Mucosa of descending colon (tissue), 3 donors: ENCODE measurements at regions of chr19 and their contacts with region 1.

Region 1: DNA sequence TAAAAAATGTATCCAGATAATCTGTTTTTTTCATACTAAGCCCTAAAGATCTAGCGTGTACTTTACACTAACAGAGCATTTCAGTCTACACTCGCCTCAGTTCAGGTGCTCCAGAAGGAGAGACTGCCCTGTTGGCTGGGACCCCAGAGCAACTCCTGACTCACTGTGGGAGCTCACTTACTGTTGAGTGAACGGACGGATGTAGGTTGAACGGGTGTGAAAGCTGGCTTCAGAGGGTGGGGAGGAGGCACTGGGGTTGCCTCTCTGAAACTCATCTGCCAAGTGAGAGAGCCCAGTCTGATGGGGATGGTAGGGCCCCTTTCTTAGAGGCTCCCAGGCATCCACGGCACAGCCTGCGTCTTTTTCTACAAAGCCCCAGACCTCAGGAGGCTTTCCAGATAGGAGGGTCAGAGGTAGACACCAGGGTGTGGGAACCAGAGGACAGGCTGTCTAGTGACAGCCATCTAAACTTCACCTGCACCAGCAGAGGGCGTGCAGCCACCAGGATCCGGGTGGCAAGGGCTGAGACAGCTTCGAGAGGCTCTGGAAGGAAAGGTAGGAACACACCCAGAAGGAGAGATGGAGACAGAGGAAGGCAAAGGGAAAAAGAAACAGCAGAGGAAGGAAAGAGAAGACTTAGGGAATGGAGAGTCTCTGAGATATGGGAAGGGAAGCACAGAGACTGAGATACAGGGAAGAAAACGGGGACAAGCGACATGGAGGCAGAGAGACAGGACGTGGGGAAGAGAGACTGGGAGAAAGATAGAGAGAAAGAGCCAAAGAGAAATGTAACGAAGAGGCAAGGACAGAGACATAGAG is 3.7 kb downstream of the KASH5 start:
- DNase-seq: peak; percentile 75 to 87 (median 79)
- ATAC-seq: peak; percentile 90
- H3K4me3 ChIP-seq: no peak overlapping the region
- H3K4me1 ChIP-seq: no peaks in the 10 kb centered on the region
- CTCF ChIP-seq: peak; percentile 52

Region 2: DNA sequence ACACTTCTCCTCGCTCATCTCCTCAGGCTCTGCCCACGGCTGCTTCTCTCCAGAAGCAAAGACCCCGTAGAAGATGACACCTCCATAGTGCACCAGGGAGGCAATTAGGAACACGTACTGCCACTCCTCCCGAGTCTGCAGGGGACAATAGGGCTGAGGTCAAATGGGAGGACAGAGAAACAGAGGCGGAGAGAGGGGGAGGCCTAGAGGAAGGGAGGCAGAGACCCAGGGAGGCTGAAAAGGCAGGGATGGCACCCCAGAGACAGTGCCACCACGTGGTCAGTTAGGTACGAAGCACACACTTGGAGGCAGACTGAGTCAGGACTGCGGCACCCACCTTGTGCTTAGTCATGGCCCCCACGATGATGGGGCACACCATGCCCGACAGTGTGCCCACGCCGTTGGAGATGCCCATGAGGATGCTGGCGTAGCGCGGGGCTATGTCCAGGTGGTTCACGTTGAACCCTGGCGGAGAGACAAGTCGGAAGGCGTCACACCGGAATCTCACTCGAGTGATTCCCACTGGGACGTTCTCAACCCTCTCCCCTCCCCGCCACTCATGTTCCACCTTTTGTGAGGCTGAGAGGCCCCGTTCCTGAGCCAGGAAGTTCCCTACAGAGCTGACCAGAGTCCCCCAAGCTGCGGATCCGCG is 39.0 kb after region 1 on chr19:
- intact Hi-C with region 1: loop called in 1 of 2 experiments (anchors 5 kb)
- DNase-seq: peak in 1 of 3 donors; percentile 37
- ATAC-seq: no peak
- H3K4me3 ChIP-seq: no peak overlapping the region
- H3K4me1 ChIP-seq: peaks cover 5% of the 10 kb centered on the region
- CTCF ChIP-seq: no peak

Region 3: DNA sequence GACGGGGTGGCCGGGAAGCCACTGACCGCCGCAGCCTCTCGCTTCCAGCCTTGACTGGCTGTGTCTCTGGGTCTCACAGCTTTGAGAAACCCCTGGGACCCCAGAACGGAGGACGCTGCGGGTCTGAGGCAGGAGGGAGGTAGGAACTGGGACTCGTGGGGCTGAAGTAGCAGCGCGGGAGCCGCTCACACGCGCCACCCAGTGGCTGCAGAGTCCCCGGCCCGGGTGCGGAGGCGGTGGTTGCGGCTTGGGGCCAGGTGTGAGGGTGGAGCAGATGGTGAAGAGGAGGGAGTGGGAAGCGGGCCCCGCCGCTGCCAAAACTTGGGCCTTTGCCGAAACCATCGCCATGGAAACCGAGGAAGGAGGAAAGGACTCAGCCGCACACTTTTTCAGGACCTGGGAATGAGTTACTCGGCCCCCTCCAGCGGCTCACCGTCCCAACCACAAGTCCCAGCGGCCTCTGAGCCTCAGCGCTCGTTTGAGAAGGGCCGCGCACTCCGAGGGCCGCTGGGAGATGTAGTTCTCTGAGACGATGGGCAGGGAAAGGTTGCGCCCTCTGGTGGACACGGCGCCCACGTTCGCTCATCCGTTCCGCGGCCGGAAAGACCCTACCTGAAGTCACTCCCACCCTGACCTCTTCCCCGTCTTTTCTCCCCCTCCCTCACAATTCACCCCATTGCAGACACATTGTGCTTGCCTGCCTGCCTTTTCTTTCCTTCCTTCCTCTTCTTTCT is 51.7 kb after region 1 on chr19:
- intact Hi-C with region 1: loop called (anchors 2 to 5 kb)
- DNase-seq: peak; percentile 96
- ATAC-seq: peak; percentile 94
- H3K4me3 ChIP-seq: peak overlapping the region; percentile 42
- H3K4me1 ChIP-seq: no peaks in the 10 kb centered on the region
- CTCF ChIP-seq: peak; percentile 75